Upper lobe of right lung (tissue), 1 donor: ENCODE measurements at regions of chr2 and their contacts with region 1.

Region 1: GRCh38 chr2:177212106-177212890 is at the start of gene HNRNPA3:
- DNase-seq: peak; percentile 100
- ATAC-seq: peak; percentile 98
- H3K4me3 ChIP-seq: peak within 1 kb of the TSS; percentile 89
- H3K27ac ChIP-seq: peak within 1 kb of the TSS; percentile 97
- H3K4me1 ChIP-seq: peaks cover 39% of the 10 kb centered on the region
- H3K27me3 ChIP-seq: no peaks in the 10 kb centered on the region
- CTCF ChIP-seq: peak; percentile 19
- total RNA-seq, gene HNRNPA3: 139 TPM

Region 2: GRCh38 chr2:177263451-177264208 is 51.3 kb after region 1 on chr2:
- intact Hi-C with region 1: loop called (anchors 10 kb)
- DNase-seq: peak; percentile 99
- ATAC-seq: peak; percentile 87
- H3K4me3 ChIP-seq: peak overlapping the region; percentile 91
- H3K27ac ChIP-seq: peak overlapping the region; percentile 99
- H3K4me1 ChIP-seq: peaks cover 49% of the 10 kb centered on the region
- H3K27me3 ChIP-seq: no peaks in the 10 kb centered on the region
- CTCF ChIP-seq: peak; percentile 90